HepG2 (cell line): ENCODE measurements at regions of chr11 and their contacts with region 1.

Region 1: GRCh38 chr11:21369947-21370346 is 700.6 kb downstream of the NELL1 start:
- DNase-seq: no peak
- ATAC-seq: no peak
- H3K4me3 ChIP-seq: no peak overlapping the region
- H3K27ac ChIP-seq: no peak overlapping the region
- H3K4me1 ChIP-seq: no peaks in the 10 kb centered on the region
- H3K27me3 ChIP-seq: no peaks in the 10 kb centered on the region
- CTCF ChIP-seq: no peak
- EP300 ChIP-seq: no peak
- POLR2A ChIP-seq: no peak
- RAD21 ChIP-seq: no peak

Region 2: DNA sequence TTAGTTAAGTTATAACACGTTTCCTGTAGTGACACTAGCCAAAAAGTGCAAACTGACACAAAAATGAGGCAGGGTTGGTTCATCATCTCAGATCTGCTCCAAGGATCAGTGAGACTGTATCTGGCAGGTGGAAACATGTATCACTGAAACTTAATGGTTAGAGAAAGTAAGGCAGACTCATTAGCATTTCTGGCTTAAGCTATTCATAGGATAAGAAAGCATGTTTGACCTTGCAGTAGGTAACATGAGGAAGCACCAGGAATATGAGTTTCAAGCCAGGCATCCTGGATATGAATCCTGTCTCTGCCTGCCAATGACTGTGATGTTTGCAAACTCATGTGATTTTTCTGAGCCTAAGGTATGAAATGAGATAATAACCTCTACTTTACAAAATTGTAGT is 31.5 kb after region 1 on chr11:
- CTCF ChIA-PET with region 1: no interaction called
- POLR2A ChIA-PET with region 1: no interaction called
- in situ Hi-C with region 1: no loop called
- intact Hi-C with region 1: loop called (anchors 1 kb)
- DNase-seq: no peak
- ATAC-seq: no peak
- H3K4me3 ChIP-seq: no peak overlapping the region
- H3K27ac ChIP-seq: no peak overlapping the region
- H3K4me1 ChIP-seq: no peaks in the 10 kb centered on the region
- H3K27me3 ChIP-seq: no peaks in the 10 kb centered on the region
- CTCF ChIP-seq: no peak
- EP300 ChIP-seq: no peak
- POLR2A ChIP-seq: no peak
- RAD21 ChIP-seq: no peak